Left cardiac atrium (tissue), 4 donors: ENCODE measurements at regions of chr2 and their contacts with region 1.

Region 1: GRCh38 chr2:127526149-127527000 is at the start of gene IWS1:
- DNase-seq: peak; percentile 97
- ATAC-seq: peak; percentile 97 to 98
- total RNA-seq, gene IWS1: 41.9 to 49.7 TPM

Region 2: DNA sequence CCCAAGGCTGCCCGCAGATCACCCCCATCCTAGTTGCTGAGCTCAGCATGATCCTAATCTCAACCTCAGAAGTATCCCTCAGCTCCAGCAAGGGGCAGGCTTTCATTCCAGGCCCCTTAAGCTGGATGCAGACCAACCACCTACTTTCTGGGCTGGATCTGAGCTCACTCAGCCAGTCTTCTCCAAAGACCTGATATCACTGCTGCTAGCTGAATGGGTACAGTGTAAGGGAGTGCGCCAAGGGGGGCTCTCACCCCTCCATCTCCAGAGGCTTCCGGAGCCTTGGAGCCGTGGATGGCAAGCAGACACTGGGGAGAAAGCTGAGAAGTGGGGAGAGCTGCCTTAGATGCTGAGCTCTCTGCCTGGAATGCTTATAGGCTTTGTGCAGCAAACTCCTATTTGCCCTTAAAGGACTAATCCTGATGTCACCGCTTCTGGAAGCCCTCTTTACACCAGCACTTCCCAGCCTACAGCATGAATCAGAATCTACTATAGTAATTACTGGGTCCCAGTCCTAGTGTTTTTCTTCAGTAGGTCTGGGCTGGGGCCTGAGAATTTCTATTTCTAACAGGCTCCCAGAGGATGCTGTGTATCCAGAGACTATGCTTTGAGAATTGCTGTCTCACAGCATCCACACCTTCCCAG is 839.4 kb before region 1 on chr2:
- intact Hi-C with region 1: no loop called
- DNase-seq: no peak
- ATAC-seq: no peak

Region 3: GRCh38 chr2:127701193-127701650 is 174.8 kb after region 1 on chr2 and contains the start of gene SFT2D3:
- intact Hi-C with region 1: loop called in 1 of 2 experiments (anchors 5 kb)
- DNase-seq: peak; percentile 93
- ATAC-seq: peak; percentile 89 to 93
- total RNA-seq, gene SFT2D3: 3.3 to 4.7 TPM